Caco-2 (cell line): ENCODE measurements at regions of chr3 and their contacts with region 1.

Region 1: GRCh38 chr3:148861277-148861869 is 3.7 kb upstream of the CPA3 start:
- DNase-seq: peak in 1 of 2 experiments; percentile 20
- H3K4me3 ChIP-seq: no peak overlapping the region
- H3K4me3 Mint-ChIP-seq: no peak overlapping the region
- H3K27ac Mint-ChIP-seq: no peak overlapping the region
- H3K4me1 ChIP-seq: no peaks in the 10 kb centered on the region
- H3K4me1 Mint-ChIP-seq: no peaks in the 10 kb centered on the region
- H3K27me3 ChIP-seq: no peaks in the 10 kb centered on the region
- H3K27me3 Mint-ChIP-seq: peaks cover 5% of the 10 kb centered on the region
- CTCF ChIP-seq: peak in 1 of 2 experiments; percentile 42

Region 2: GRCh38 chr3:148880681-148881080 is 19.3 kb after region 1 on chr3:
- CTCF ChIA-PET with region 1: interaction called, 6 read pairs
- POLR2A ChIA-PET with region 1: no interaction called
- intact Hi-C with region 1: loop called (anchors 1 kb)
- DNase-seq: peak in 1 of 2 experiments; percentile 19
- H3K4me3 ChIP-seq: no peak overlapping the region
- H3K4me3 Mint-ChIP-seq: no peak overlapping the region
- H3K27ac Mint-ChIP-seq: no peak overlapping the region
- H3K4me1 ChIP-seq: no peaks in the 10 kb centered on the region
- H3K4me1 Mint-ChIP-seq: no peaks in the 10 kb centered on the region
- H3K27me3 ChIP-seq: no peaks in the 10 kb centered on the region
- H3K27me3 Mint-ChIP-seq: peaks cover 14% of the 10 kb centered on the region
- CTCF ChIP-seq: peak; percentile 52 to 55

Region 3: DNA sequence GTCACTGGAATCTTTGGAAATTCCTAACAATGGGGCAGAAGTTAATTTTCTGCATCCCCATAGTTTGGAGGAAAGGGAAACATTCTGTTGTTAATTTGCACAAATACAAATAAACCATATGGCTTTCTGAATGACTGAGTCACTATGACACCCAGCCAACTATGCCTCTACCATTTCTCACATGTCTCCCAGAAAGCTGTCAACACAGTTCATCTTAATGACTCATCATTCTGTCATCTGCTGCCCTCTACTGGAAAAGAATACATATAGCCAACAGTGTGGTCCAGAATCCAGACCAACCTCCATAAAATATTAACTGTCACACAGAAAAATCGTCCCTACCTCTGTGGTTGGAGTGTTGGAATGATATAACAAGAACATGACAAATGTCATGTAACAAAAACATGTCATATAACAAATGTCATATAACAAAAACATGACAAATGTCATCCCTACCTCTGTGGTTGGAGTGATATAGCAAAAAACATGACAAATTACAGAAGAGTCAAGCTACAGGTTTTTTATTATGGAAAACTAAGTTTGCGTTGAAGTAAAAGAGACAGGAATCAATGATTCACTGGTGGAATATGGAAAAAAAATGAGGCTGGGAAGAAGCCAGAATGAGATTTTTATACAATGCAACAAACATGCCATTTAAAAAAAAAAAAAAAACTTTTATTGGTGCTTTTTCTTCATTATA is 82.3 kb after region 1 on chr3:
- CTCF ChIA-PET with region 1: interaction called, 3 read pairs
- POLR2A ChIA-PET with region 1: no interaction called
- intact Hi-C with region 1: loop called (anchors 1 kb)
- DNase-seq: peak in 1 of 2 experiments; percentile 61
- H3K4me3 ChIP-seq: no peak overlapping the region
- H3K4me3 Mint-ChIP-seq: no peak overlapping the region
- H3K27ac Mint-ChIP-seq: no peak overlapping the region
- H3K4me1 ChIP-seq: no peaks in the 10 kb centered on the region
- H3K4me1 Mint-ChIP-seq: no peaks in the 10 kb centered on the region
- H3K27me3 ChIP-seq: no peaks in the 10 kb centered on the region; the same call in 1 of the 2 replicates
- H3K27me3 Mint-ChIP-seq: peaks cover 14% of the 10 kb centered on the region
- CTCF ChIP-seq: peak; percentile 55 to 69

Region 4: DNA sequence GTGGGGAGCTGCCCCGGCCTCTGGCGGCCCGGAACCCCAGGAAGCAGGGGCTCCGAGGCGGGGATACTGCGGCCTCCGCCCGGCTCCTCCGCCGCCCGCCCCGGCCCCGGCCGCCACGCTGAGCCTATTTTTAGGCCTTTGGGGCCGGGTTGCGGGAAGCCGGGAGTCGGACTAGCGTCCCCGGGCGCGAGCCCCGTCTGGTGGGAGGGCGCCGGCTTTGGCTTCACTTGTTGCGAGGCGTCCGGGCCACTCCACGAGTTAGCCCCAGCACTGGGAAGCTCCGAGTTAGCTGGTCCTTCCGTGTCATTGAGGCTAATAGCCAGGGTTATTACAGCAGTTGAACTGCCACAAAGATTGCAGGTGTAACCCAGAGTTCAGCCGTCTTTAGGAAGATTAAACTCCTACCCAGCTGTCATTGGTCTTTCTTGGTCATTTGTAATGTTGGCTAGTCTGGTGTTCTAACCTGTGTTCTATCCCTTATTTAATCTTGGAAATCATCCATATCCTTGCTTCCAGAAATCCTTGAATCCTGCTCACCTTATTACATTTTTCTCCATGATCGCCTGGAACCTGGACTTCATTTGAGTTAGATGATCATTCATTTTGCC is 130.8 kb after region 1 on chr3:
- CTCF ChIA-PET with region 1: no interaction called
- POLR2A ChIA-PET with region 1: no interaction called
- intact Hi-C with region 1: no loop called
- DNase-seq: peak in 1 of 2 experiments; percentile 51
- H3K4me3 ChIP-seq: peak overlapping the region; percentile 88
- H3K4me3 Mint-ChIP-seq: peak overlapping the region; percentile 75
- H3K27ac Mint-ChIP-seq: peak overlapping the region; percentile 45
- H3K4me1 ChIP-seq: peaks cover 7% of the 10 kb centered on the region; the same call in 1 of the 2 replicates
- H3K4me1 Mint-ChIP-seq: no peaks in the 10 kb centered on the region
- H3K27me3 ChIP-seq: no peaks in the 10 kb centered on the region
- H3K27me3 Mint-ChIP-seq: no peaks in the 10 kb centered on the region
- CTCF ChIP-seq: no peak